ENCODE measurements at regions of chr12 and their contacts with region 1.

Region 1: DNA sequence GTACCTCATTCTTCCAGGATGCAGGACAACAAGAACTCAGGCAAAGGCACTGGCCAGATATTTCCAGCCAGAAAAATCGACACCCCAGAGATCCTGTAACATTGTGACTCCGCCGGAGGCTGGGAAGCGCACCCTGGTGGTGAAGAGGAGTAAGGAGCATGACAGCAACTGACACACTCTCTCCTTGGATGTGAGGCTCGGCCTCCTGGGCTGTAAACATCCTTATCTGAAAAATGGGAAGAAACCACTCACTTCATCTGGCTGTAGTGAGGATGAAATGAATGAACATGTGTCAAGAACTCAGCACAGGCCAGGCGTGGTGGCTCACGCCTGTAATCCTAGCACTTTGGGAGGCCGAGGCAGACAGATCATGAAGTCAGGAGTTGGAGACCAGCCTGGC is 27.5 kb downstream of the TCHP start:
- DNase-seq: peak; percentile 64 to 78
- ATAC-seq: peak; percentile 91 to 92
- H3K4me3 ChIP-seq: no peak overlapping the region
- H3K27ac ChIP-seq: no peak overlapping the region
- H3K4me1 ChIP-seq: no peaks in the 10 kb centered on the region
- CTCF ChIP-seq: peak; percentile 72
- EP300 ChIP-seq: no peak
- POLR2A ChIP-seq: no peak
- RAD21 ChIP-seq: peak; percentile 51 to 66

Region 2: GRCh38 chr12:109912853-109913321 is 14.7 kb before region 1 on chr12:
- CTCF ChIA-PET with region 1: interaction called, 16 read pairs
- POLR2A ChIA-PET with region 1: no interaction called
- DNase-seq: no peak
- ATAC-seq: no peak
- H3K4me3 ChIP-seq: no peak overlapping the region
- H3K27ac ChIP-seq: no peak overlapping the region
- H3K4me1 ChIP-seq: no peaks in the 10 kb centered on the region
- CTCF ChIP-seq: no peak
- EP300 ChIP-seq: no peak
- POLR2A ChIP-seq: no peak
- RAD21 ChIP-seq: no peak

Region 3: GRCh38 chr12:109940339-109940923 is 12.8 kb after region 1 on chr12:
- CTCF ChIA-PET with region 1: interaction called, 10 read pairs
- POLR2A ChIA-PET with region 1: interaction called, 3 read pairs
- DNase-seq: no peak
- ATAC-seq: no peak
- H3K4me3 ChIP-seq: no peak overlapping the region
- H3K27ac ChIP-seq: no peak overlapping the region
- H3K4me1 ChIP-seq: no peaks in the 10 kb centered on the region
- CTCF ChIP-seq: no peak
- EP300 ChIP-seq: no peak
- POLR2A ChIP-seq: no peak
- RAD21 ChIP-seq: no peak

Measured in A549 (cell line).